WTC11 (cell line): ENCODE measurements at regions of chr22 and their contacts with region 1.

Region 1: DNA sequence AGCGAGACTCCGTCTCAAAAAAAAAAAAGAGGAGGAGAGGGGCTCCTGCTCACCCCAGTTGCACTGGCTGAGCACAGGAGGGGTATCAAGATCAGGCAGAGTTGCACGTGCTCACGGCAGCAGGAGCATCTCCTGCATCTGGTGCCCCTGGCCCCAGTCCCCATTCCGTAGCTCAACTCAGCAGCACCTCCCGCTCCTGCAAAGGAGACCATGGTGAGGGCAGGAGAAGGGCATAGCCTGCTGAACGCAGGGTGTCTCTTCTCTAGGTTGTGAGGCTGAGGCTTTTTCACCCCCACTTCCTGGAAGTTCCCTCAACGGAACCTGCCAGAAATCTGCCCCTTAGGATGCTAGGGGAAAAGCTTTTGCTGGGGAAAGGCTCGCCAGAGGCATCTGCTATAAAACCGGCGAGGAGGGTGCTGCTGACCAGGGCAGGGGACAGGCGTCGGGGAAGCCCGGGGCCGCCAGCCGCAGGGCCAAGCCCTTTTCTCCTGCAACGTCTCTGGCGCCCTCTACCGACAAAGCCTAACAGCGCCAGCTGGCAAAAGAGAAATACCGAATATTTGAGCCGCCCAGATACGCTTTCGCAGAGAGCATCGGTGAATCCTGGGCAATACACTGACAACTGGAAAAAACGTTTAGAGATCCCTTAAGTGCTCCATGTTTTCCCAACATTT is 1.0 kb upstream of the PPP6R2 start:
- DNase-seq: peak; percentile 96
- ATAC-seq: peak; percentile 79
- H3K4me3 Mint-ChIP-seq: peak overlapping the region; percentile 81
- H3K27ac Mint-ChIP-seq: peak overlapping the region; percentile 91
- H3K4me1 Mint-ChIP-seq: no peaks in the 10 kb centered on the region
- H3K27me3 Mint-ChIP-seq: peaks cover 11% of the 10 kb centered on the region
- CTCF ChIP-seq: peak; percentile 90

Region 2: DNA sequence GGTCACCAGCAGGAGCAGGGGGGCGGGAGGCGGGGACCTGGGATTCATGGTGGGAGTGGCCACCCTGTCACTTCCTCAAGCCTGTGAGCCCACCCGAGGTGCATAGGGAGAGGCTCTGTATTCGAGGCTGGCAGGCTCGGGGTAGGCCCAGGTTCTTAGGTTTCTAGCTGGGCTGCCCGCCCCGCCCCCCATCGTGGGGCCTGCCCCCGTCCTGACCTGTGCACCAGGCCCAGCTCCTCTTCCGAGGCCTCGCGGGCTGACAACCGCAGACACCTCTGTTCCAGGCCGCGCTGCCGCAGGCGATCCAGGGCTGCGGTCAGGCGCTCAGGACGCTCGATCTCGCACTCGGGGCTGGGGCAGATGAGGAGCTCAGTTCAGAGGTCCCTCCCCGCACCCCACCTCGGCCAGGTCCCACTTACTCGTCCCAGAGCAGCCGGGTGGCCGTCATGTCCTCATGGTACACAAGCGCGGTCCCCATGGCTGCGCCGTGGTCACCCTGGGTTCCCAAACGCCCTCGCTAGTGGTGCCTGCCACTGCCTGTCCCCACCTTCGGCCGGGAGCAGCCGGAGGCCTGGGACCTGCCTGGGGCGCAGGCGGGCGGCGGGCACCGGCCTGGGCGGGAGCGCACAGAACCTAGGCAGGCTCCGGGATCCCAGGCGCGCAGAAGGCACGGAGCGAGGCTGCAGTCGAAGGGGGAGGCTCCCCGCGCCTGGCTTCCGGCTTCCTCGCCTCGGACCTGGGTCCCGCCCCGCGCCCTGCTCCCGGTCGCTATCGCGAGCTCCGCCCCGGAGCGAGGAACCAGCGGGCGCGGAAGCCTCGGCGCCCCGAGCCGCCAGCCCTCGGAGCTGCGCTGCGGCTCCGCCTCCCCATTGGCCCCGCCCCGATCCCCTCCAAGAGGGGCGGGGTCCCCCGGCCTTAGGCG is 91.3 kb before region 1 on chr22 and contains the start of gene HDAC10:
- CTCF ChIA-PET with region 1: interaction called, 17 read pairs
- POLR2A ChIA-PET with region 1: no interaction called
- DNase-seq: peak; percentile 89
- ATAC-seq: peak; percentile 74
- H3K4me3 Mint-ChIP-seq: peak within 1 kb of the TSS; percentile 72
- H3K27ac Mint-ChIP-seq: no peak within 1 kb of the TSS
- H3K4me1 Mint-ChIP-seq: peaks cover 4% of the 10 kb centered on the region; the same call in 1 of the 2 replicates
- H3K27me3 Mint-ChIP-seq: no peaks in the 10 kb centered on the region; the same call in 1 of the 2 replicates
- CTCF ChIP-seq: no peak
- total RNA-seq, gene HDAC10: 31.9 to 40.9 TPM (median 38.2 TPM) in 3 replicates

Region 3: GRCh38 chr22:50276143-50276542 is 66.0 kb before region 1 on chr22:
- CTCF ChIA-PET with region 1: interaction called, 14 read pairs
- POLR2A ChIA-PET with region 1: no interaction called
- DNase-seq: peak; percentile 39
- ATAC-seq: peak; percentile 6; the same call in 1 of the 2 replicates
- H3K4me3 Mint-ChIP-seq: no peak overlapping the region
- H3K27ac Mint-ChIP-seq: no peak overlapping the region
- H3K4me1 Mint-ChIP-seq: no peaks in the 10 kb centered on the region
- H3K27me3 Mint-ChIP-seq: peaks cover 8% of the 10 kb centered on the region
- CTCF ChIP-seq: peak; percentile 75

Region 4: GRCh38 chr22:50293441-50294318 is 48.4 kb before region 1 on chr22:
- CTCF ChIA-PET with region 1: interaction called, 13 read pairs
- POLR2A ChIA-PET with region 1: interaction called, 4 read pairs
- DNase-seq: peak; percentile 85
- ATAC-seq: peak; percentile 89
- H3K4me3 Mint-ChIP-seq: no peak overlapping the region
- H3K27ac Mint-ChIP-seq: peak overlapping the region; percentile 72; the same call in 1 of the 2 replicates
- H3K4me1 Mint-ChIP-seq: peaks cover 27% of the 10 kb centered on the region
- H3K27me3 Mint-ChIP-seq: no peaks in the 10 kb centered on the region
- CTCF ChIP-seq: no peak

Region 5: DNA sequence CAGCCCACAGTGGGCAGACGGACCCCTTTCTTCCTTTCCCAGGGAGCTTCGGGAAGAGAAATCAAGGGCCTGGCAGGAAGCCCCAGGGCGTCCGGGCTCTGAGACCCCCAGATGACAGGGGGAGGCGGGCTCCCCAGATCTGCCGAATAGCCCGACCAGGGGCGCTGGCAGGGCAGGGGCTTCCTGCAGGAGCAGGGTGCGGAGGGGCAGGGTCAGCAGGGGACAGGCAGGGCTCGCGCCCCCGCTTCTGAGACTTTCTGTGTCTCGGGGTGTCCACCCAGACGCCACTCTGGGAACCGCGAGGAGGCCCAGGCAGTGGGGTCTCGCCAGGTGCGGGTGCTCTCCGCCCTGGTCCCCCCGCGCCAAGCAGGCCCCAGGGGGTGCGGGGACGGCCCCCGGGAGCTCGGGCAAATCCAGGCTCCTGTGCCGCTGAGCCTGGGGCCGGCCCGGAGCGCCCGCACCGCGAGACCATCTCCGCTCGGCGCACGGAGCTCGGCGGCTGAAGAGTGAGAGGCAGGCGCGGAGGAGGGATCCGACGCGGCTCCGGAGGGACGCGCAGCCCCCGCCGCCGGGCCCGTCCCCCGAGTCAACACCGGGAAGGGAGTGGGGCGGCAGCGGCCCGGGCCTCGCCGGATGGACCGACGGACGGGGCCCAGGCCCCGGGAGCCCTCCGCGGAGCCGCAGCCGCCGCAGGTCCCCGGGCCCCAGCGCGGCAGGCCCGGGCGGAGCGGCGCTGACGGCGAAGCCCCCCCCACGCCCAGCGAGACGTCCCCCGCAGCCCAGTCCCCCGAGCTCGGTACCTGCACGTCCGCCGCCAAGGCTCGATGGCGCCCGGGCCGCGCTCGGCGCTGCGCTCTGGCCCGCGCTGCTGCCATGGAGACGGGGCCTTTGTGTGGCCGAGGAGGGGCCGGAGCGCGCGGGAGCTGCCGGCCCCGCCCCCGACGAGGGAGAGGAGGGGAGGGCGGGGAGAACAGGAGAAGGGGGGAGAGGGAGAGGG is 35.1 kb before region 1 on chr22 and contains the start of gene PLXNB2:
- CTCF ChIA-PET with region 1: interaction called, 10 read pairs
- POLR2A ChIA-PET with region 1: no interaction called
- DNase-seq: peak; percentile 73
- ATAC-seq: peak; percentile 31
- H3K4me3 Mint-ChIP-seq: peak within 1 kb of the TSS; percentile 35
- H3K27ac Mint-ChIP-seq: no peak within 1 kb of the TSS
- H3K4me1 Mint-ChIP-seq: peaks cover 29% of the 10 kb centered on the region
- H3K27me3 Mint-ChIP-seq: peaks cover 6% of the 10 kb centered on the region; the same call in 1 of the 2 replicates
- CTCF ChIP-seq: no peak
- total RNA-seq, gene PLXNB2: 110 to 113 TPM (median 111 TPM) in 3 replicates

Region 6: GRCh38 chr22:50318698-50319411 is 23.3 kb before region 1 on chr22:
- CTCF ChIA-PET with region 1: interaction called, 14 read pairs
- POLR2A ChIA-PET with region 1: no interaction called
- DNase-seq: no peak
- ATAC-seq: no peak
- H3K4me3 Mint-ChIP-seq: no peak overlapping the region
- H3K27ac Mint-ChIP-seq: no peak overlapping the region
- H3K4me1 Mint-ChIP-seq: peaks cover 5% of the 10 kb centered on the region
- H3K27me3 Mint-ChIP-seq: no peaks in the 10 kb centered on the region; the same call in 1 of the 2 replicates
- CTCF ChIP-seq: no peak

Region 7: GRCh38 chr22:50326959-50327710 is 15.0 kb before region 1 on chr22 and contains the start of gene DENND6B:
- CTCF ChIA-PET with region 1: interaction called, 19 read pairs
- POLR2A ChIA-PET with region 1: no interaction called
- DNase-seq: peak; percentile 77
- ATAC-seq: peak; percentile 92
- H3K4me3 Mint-ChIP-seq: peak within 1 kb of the TSS; percentile 87
- H3K27ac Mint-ChIP-seq: no peak within 1 kb of the TSS; the same call in 1 of the 2 replicates
- H3K4me1 Mint-ChIP-seq: peaks cover 3% of the 10 kb centered on the region; the same call in 1 of the 2 replicates
- H3K27me3 Mint-ChIP-seq: peaks cover 28% of the 10 kb centered on the region
- CTCF ChIP-seq: peak; percentile 33; the same call in 1 of the 2 replicates
- total RNA-seq, gene DENND6B: 2.3 to 2.7 TPM (median 2.5 TPM) in 3 replicates